Activated CD4-positive, alpha-beta T cell treated with anti-CD3 and anti-CD28 coated beads, Interleukin-2, amount 10 ng/mL, durations not matched to agents 24 days and 14 days (primary cell): ENCODE measurements at regions of chr17 and their contacts with region 1.

Region 1: GRCh38 chr17:81512560-81513371 is at the start of gene ACTG1:
- DNase-seq: peak; percentile 97
- H3K4me3 Mint-ChIP-seq: peak within 1 kb of the TSS; percentile 99
- H3K27ac Mint-ChIP-seq: peak within 1 kb of the TSS; percentile 93
- H3K4me1 Mint-ChIP-seq: peaks cover 34% of the 10 kb centered on the region
- H3K27me3 Mint-ChIP-seq: peaks cover 2% of the 10 kb centered on the region
- total RNA-seq, gene ACTG1: 3,353 and 3,420 TPM in 2 replicates

Region 2: DNA sequence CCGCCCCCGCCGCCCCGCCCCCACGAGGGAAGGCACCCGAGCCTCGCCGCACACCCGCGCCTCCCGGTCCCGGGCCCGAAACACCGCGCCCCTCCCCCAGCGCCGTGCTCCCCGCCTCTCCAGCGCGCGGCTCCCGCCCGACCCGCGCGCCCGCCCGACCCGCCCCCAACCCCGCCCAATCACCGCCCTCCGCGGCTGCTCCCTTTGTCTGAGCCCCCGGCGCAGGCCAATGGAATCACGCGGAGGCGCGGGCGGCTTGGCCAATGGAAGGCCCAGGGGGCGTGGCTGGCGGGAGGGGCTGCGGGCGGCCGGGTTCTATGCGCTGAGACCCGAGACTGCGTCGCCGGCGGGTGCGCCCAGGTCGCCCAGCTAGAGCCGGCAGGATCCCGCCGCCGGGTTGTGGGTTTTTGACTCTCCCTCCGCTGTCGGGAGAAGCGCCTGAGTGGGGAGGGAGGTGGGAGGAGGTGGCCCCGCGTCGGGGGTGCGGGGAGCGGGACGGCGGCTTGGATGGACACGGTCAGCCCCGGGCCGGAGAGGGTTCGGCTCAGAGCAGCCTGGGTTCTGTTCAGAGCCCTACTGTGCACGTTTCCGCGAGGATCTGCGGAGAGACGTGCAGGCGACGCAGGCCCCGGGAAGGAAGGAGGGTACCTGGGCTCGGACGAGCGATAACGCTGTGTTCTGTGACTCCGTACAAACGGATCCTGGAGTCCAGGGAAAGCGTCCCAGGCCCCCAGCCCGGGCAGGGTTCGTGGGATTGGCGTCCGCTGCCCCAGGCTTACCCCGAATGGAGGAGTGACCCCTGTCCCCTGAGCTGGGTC is 166.5 kb before region 1 on chr17:
- intact Hi-C with region 1: loop called (anchors 1 kb)
- DNase-seq: peak; percentile 98
- H3K4me3 Mint-ChIP-seq: peak overlapping the region; percentile 64
- H3K27ac Mint-ChIP-seq: no peak overlapping the region
- H3K4me1 Mint-ChIP-seq: peaks cover 7% of the 10 kb centered on the region
- H3K27me3 Mint-ChIP-seq: peaks cover 44% of the 10 kb centered on the region

Region 3: DNA sequence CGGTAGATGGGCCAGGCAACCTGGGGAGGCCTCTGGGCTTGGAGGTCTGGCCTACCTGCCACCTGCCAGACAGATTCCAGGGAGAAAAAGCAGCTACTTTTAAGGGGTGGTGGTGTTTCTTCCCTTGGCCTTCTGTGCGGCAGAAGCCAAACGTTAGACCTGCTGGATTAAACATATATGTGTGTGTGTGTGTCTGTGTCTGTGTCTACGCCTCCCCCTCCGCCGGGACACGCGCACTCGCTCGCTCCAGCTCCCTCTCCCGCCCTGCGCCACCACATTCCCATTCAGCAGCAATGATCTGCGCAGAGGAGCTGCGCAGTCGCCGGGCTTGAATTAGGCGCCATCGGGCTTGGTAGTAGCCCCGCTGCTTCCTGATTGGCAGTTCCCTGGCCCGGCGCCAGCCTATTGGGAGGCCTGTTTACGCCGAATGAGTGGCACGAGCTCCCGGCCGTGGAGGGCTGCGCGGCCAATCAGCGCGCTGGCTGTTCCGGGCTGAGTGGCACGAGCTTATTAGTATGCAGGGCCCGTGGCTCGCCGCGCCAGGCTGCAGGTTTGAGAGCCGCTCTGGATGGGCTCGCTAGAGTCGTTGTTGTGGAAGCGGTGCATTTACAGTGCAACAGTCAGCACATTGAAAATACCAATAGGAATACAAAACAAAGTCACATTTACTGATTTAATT is 117.7 kb before region 1 on chr17 and contains the start of gene BAHCC1:
- intact Hi-C with region 1: loop called (anchors 1 kb)
- DNase-seq: peak; percentile 89
- H3K4me3 Mint-ChIP-seq: peak within 1 kb of the TSS; percentile 59
- H3K27ac Mint-ChIP-seq: peak within 1 kb of the TSS; percentile 78
- H3K4me1 Mint-ChIP-seq: peaks cover 16% of the 10 kb centered on the region
- H3K27me3 Mint-ChIP-seq: peaks cover 53% of the 10 kb centered on the region
- total RNA-seq, gene BAHCC1: 0.05 TPM in 1 of 2 replicates, not detected in the other

Region 4: GRCh38 chr17:81527591-81528383 is 15.0 kb after region 1 on chr17 and contains the start of gene FSCN2:
- intact Hi-C with region 1: no loop called
- DNase-seq: no peak
- H3K4me3 Mint-ChIP-seq: no peak within 1 kb of the TSS
- H3K27ac Mint-ChIP-seq: no peak within 1 kb of the TSS
- H3K4me1 Mint-ChIP-seq: no peaks in the 10 kb centered on the region
- H3K27me3 Mint-ChIP-seq: no peaks in the 10 kb centered on the region
- total RNA-seq, gene FSCN2: 0.26 and 0.51 TPM in 2 replicates

Region 5: DNA sequence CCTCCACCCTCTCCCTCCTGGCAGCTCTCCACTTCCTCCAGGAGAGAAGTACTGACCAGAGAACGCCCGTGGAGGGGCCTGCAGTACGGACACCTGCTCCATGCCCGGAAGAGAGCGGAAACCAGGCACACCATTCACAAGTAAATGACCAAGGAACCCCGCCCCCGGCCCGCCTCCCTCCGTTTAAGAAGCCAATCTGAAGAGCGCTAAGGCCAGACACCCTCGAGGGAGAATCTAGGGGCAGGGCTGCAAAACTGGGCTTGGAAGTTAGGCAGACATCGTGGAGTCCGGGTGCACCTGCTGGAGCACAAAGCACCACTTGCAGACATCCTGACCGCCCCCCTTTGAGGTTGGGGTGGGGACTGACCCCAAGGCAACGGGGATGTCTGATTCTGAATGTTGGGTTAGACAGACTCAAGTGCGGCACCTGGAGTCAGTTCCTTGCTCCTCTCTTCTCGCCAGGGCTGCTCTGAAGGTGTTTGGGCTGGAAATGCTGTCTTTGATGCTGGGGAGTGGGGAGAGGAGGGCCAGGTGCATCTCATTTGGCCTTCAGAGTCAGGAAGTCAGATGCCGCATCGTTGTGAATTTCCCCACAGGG is 40.4 kb after region 1 on chr17:
- intact Hi-C with region 1: loop called (anchors 2 kb)
- DNase-seq: peak; percentile 92
- H3K4me3 Mint-ChIP-seq: peak overlapping the region; percentile 91
- H3K27ac Mint-ChIP-seq: peak overlapping the region; percentile 94
- H3K4me1 Mint-ChIP-seq: peaks cover 24% of the 10 kb centered on the region
- H3K27me3 Mint-ChIP-seq: no peaks in the 10 kb centered on the region

Region 6: DNA sequence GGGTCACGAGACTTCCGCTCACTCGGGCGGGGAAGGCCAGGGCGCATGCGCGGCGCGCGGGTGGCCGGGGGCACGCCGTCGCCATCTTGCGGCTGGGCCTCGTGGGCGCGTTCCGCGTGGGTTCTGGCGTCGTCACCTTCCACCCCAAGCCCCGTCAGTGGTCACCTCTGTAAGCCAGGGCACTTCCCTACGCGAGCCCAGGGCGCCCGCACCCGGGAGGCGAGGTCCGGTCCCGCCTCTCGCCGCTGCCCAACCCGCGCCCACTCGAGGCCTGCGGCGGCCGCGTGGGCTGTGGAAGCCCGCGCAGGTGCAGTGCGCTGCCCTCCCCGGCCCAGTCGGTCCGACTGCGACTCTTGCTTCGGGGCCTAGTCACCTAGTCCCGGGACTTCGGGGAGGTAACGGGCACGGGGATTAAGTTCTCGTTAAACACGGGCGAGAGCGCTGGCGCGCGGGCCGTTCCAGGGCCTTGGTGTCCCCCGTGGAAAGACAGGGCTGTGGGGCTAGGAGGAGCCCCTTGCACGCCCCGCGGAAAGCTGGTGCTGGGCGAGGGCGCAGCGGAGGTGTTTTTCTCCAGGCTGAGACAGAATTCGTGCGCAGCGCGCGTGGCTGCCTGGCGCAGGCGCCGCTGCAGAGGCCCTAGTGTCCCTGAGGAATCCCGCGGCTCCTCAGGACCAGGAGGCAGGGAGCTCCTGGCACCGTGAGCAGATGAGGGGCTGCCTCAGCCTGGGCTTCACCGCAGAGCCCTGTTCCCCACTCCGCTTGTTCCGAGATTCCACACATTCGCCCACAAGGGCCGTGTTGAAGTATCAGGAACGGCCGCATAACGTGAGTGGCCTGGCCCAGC is 358.8 kb after region 1 on chr17:
- intact Hi-C with region 1: loop called (anchors 5 kb)
- DNase-seq: peak; percentile 99
- H3K4me3 Mint-ChIP-seq: peak overlapping the region; percentile 87
- H3K27ac Mint-ChIP-seq: peak overlapping the region; percentile 96
- H3K4me1 Mint-ChIP-seq: peaks cover 31% of the 10 kb centered on the region
- H3K27me3 Mint-ChIP-seq: no peaks in the 10 kb centered on the region